ENCODE measurements at regions of chr14 and their contacts with region 1.

Region 1: DNA sequence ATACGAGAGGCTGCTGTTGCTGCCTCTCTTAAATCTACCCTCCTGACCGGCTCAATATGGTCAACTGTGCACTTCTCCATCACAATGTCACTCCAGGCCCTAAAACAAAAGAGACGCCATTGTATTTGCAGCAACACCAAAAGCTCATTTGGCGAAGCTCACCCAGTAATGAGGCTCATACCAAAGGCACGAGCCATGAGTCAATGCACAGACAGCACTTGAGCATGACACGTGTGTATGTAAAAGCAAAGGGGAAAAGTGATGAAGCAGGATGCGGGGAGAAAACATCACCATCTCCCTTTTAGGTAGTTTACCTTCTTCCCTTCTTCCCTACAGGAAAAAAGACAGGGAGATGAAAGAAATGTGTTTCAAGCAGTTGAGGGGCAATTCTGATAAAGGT is 150.3 kb downstream of the FOXN3 start:
- DNase-seq: no peak
- ATAC-seq: no peak
- H3K4me3 ChIP-seq: no peak overlapping the region
- H3K27ac ChIP-seq: no peak overlapping the region
- H3K4me1 ChIP-seq: peaks cover 30% of the 10 kb centered on the region
- H3K27me3 ChIP-seq: no peaks in the 10 kb centered on the region
- CTCF ChIP-seq: no peak

Region 2: GRCh38 chr14:88765130-88765529 is 501.6 kb before region 1 on chr14:
- intact Hi-C with region 1: loop called in 1 of 2 experiments (anchors 5 kb)
- DNase-seq: no peak
- ATAC-seq: no peak
- H3K4me3 ChIP-seq: no peak overlapping the region
- H3K27ac ChIP-seq: no peak overlapping the region
- H3K4me1 ChIP-seq: no peaks in the 10 kb centered on the region
- H3K27me3 ChIP-seq: no peaks in the 10 kb centered on the region
- CTCF ChIP-seq: no peak